ENCODE measurements at regions of chr1 and their contacts with region 1.

Region 1: DNA sequence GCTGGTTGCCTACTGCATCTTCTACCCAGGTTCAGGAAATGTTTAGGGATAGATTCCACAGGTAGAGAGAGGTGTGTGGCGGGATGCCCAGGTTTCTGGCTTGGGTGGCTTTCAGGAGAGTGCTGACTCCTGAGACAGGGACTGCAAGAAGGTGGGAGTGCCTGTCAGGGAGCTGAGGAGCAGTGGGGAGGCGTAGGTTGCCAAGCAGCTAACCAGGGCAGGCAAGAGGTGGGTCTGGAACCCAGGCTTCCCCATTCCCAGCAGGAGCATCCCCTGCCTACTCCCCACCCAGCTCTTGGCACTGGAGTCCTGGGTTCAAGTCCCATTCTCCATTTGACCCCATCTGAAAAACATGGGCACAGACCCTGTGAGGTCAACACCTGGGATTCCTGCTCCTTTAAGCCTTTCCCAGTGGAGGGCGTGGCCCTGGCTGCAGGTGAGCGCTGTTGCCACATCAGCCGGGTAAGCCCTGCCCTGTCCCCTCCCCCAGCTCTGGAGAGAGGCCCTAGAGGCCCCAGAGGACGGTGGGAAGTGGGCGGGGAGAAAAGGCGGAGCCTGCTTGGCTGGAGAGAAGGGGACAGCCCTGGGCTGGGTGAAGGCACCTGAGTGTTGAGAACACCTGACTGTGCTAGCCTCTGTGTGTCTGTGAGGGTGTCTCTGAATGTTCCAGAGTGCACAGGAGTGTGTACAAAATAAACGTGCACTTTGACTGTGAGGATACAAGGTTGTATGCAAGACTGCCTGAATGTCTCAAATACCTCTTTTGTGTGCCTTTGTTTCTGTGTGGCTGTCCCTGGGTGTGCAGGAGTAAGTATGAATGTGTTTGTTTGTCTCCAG is 14.0 kb upstream of the SYNC start:
- DNase-seq: peak; percentile 92
- H3K4me3 Mint-ChIP-seq: no peak overlapping the region
- H3K27ac Mint-ChIP-seq: no peak overlapping the region
- H3K4me1 Mint-ChIP-seq: peaks cover 9% of the 10 kb centered on the region
- H3K27me3 Mint-ChIP-seq: peaks cover 2% of the 10 kb centered on the region

Region 2: DNA sequence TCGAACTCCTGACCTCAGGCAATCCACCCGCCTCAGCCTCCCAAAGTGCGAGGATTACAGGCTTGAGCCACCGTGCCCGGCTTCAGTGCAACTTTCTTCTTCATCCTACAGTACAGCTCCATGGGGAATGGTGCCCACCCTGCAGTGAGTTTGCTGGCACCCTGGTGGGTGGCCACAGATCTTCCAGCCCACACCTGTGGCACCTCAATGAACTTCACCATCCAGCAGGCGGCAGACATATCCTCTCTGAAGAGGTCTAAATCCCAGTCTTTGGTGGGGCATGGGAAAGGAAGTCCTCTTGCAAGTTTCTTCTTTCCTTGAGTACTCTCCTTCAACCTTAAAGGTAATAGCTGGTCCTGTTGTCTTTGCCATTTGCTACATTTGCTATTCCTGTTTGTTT is 195.4 kb before region 1 on chr1:
- CTCF ChIA-PET with region 1: interaction called, 6 read pairs
- intact Hi-C with region 1: loop called (anchors 1 kb)
- DNase-seq: no peak
- H3K4me3 Mint-ChIP-seq: peak overlapping the region; percentile 66
- H3K27ac Mint-ChIP-seq: no peak overlapping the region
- H3K4me1 Mint-ChIP-seq: peaks cover 3% of the 10 kb centered on the region
- H3K27me3 Mint-ChIP-seq: no peaks in the 10 kb centered on the region

Region 3: GRCh38 chr1:32733582-32734321 is 17.2 kb after region 1 on chr1:
- CTCF ChIA-PET with region 1: interaction called, 20 read pairs
- intact Hi-C with region 1: no loop called
- DNase-seq: no peak
- H3K4me3 Mint-ChIP-seq: no peak overlapping the region
- H3K27ac Mint-ChIP-seq: no peak overlapping the region
- H3K4me1 Mint-ChIP-seq: peaks cover 2% of the 10 kb centered on the region
- H3K27me3 Mint-ChIP-seq: no peaks in the 10 kb centered on the region

Region 4: GRCh38 chr1:32753532-32754312 is 37.2 kb after region 1 on chr1:
- CTCF ChIA-PET with region 1: interaction called, 10 read pairs
- intact Hi-C with region 1: no loop called
- DNase-seq: peak; percentile 61
- H3K4me3 Mint-ChIP-seq: peak overlapping the region; percentile 49
- H3K27ac Mint-ChIP-seq: no peak overlapping the region
- H3K4me1 Mint-ChIP-seq: peaks cover 5% of the 10 kb centered on the region
- H3K27me3 Mint-ChIP-seq: peaks cover 4% of the 10 kb centered on the region

Region 5: GRCh38 chr1:32761253-32761880 is 44.8 kb after region 1 on chr1:
- CTCF ChIA-PET with region 1: interaction called, 22 read pairs
- intact Hi-C with region 1: no loop called
- DNase-seq: peak; percentile 73
- H3K4me3 Mint-ChIP-seq: no peak overlapping the region
- H3K27ac Mint-ChIP-seq: peak overlapping the region; percentile 53
- H3K4me1 Mint-ChIP-seq: peaks cover 26% of the 10 kb centered on the region
- H3K27me3 Mint-ChIP-seq: no peaks in the 10 kb centered on the region

Region 6: DNA sequence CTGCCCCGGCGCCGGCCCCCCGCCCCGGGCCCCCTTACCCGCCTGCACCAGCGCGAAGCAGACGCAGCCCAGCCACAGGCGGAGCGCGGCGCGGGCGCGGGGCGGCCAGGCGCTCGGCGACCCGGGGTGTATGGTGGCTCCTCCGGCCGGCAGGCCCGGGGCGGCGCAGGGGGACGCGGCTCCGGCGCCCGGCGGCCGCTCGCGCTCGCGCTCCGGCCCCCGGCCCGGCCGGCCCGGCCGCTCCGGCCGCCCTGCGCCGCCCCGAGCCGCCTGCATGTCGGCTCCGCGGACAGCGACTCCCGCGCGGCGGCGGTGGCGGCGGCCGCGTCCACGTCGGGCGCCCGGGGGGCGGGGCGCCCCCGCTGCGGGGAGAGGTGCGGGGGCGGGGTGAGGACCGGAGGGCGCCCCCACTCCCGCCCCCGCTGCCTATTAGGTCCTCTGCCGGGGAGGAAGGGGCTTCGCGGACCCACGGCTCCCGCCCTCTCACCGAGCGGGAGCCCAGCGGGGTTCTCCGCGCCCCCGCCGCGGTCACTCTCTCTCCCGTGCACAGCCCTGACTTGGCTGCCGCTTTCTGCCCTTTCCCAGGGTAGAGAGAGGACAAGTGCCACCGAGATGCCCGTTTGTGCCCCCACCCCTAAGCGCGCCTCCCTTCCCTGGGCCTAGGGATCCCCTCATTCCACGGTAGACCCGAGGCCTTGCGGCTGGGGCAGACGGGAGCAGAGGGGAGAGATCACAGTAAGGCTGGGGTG is 154.3 kb after region 1 on chr1 and contains the start of gene FNDC5:
- CTCF ChIA-PET with region 1: interaction called, 63 read pairs
- intact Hi-C with region 1: loop called (anchors 1 kb)
- DNase-seq: no peak
- H3K4me3 Mint-ChIP-seq: peak within 1 kb of the TSS; percentile 35
- H3K27ac Mint-ChIP-seq: no peak within 1 kb of the TSS
- H3K4me1 Mint-ChIP-seq: peaks cover 6% of the 10 kb centered on the region
- H3K27me3 Mint-ChIP-seq: peaks cover 39% of the 10 kb centered on the region
- total RNA-seq, gene FNDC5: not detected

Region 7: GRCh38 chr1:33065301-33065700 is 348.8 kb after region 1 on chr1:
- CTCF ChIA-PET with region 1: no interaction called
- intact Hi-C with region 1: no loop called
- DNase-seq: no peak
- H3K4me3 Mint-ChIP-seq: no peak overlapping the region
- H3K27ac Mint-ChIP-seq: no peak overlapping the region
- H3K4me1 Mint-ChIP-seq: no peaks in the 10 kb centered on the region
- H3K27me3 Mint-ChIP-seq: peaks cover 2% of the 10 kb centered on the region

Region 8: GRCh38 chr1:33080885-33081553 is 364.5 kb after region 1 on chr1 and contains the start of gene AZIN2:
- CTCF ChIA-PET with region 1: no interaction called
- intact Hi-C with region 1: loop called (anchors 10 kb)
- DNase-seq: peak; percentile 98
- H3K4me3 Mint-ChIP-seq: peak within 1 kb of the TSS; percentile 75
- H3K27ac Mint-ChIP-seq: peak within 1 kb of the TSS; percentile 19
- H3K4me1 Mint-ChIP-seq: peaks cover 18% of the 10 kb centered on the region
- H3K27me3 Mint-ChIP-seq: no peaks in the 10 kb centered on the region
- total RNA-seq, gene AZIN2: 1.5 to 1.6 TPM

Measured in activated naive CD4-positive, alpha-beta T cell treated with anti-CD3 and anti-CD28 coated beads for 36 hours (primary cell).